Gastrocnemius medialis (tissue), 4 donors: ENCODE measurements at regions of chr19 and their contacts with region 1.

Region 1: DNA sequence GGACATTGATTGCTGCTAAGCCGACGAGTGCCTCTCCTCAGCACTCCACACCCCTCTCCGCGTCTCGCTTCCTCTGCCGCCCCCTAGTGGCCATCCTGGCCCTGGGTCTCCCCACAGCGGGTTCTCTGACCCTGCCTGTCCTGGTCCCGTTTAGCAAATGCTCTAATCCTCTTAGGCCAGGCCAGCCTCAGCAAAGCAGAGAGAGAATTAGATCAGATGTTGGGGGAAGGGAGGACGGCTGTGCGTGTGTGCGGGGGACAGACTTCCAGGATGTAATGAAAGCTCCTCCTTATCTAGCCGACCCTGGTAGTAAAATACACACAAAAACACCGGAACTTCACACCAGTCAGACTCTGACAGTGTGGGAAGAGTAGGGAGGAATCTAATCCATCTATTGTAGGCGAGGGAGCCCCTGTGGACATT is 4.5 kb downstream of the TPRX2 start:
- DNase-seq: peak; percentile 17 to 32
- ATAC-seq: no peak
- H3K4me3 ChIP-seq: no peak overlapping the region
- H3K27ac ChIP-seq: no peak overlapping the region
- H3K4me1 ChIP-seq: no peaks in the 10 kb centered on the region
- H3K27me3 ChIP-seq: no peaks in the 10 kb centered on the region
- CTCF ChIP-seq: peak; percentile 23 to 83 (median 60)
- POLR2A ChIP-seq: no peak

Region 2: GRCh38 chr19:47994209-47994802 is 130.8 kb after region 1 on chr19 and contains the start of gene ELSPBP1:
- in situ Hi-C with region 1: loop called in 1 of 4 experiments (anchors 25 kb)
- intact Hi-C with region 1: no loop called
- DNase-seq: no peak
- ATAC-seq: no peak
- H3K4me3 ChIP-seq: no peak within 1 kb of the TSS
- H3K27ac ChIP-seq: no peak within 1 kb of the TSS
- H3K4me1 ChIP-seq: no peaks in the 10 kb centered on the region
- H3K27me3 ChIP-seq: peaks cover 0 to 5% (median 3%) of the 10 kb centered on the region in 3 donors
- CTCF ChIP-seq: no peak
- POLR2A ChIP-seq: no peak
- total RNA-seq, gene ELSPBP1: not detected